ENCODE measurements at regions of chr3 and their contacts with region 1.

Region 1: GRCh38 chr3:187679638-187680396 is 9.6 kb upstream of the SST start:
- DNase-seq: peak; percentile 50
- ATAC-seq: peak; percentile 70
- H3K4me3 Mint-ChIP-seq: no peak overlapping the region
- H3K27ac Mint-ChIP-seq: no peak overlapping the region
- H3K4me1 Mint-ChIP-seq: no peaks in the 10 kb centered on the region
- H3K27me3 Mint-ChIP-seq: peaks cover 37% of the 10 kb centered on the region
- CTCF ChIP-seq: peak; percentile 55

Region 2: DNA sequence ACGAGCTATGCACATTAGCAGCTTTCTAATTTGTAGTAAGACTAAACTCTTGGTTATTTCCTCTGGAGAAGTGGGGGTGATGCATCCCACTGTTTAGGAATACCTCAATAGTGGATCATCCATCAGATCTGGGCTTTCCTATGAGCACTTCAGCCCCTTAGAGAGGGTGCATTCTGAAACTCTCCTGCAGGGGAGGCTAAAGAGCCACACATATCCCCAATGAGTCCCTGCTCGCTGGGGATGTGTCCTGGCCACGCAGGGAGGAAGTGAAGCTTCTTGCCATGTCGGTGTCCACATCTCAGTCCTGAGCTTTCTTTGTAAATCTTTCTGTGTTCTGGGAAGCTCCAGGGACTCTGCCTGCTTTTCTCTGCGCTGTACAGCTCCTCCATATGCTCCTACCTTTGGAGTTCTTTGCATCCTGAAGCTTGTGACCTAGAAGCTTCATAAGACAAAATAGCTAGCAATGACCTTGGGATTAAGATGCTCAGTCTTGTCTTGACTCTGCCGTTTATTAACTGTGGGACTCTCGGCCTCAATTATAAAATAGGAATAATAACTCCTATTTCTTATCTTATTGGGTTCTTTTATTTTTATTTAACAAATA is 360.0 kb before region 1 on chr3:
- CTCF ChIA-PET with region 1: interaction called, 336 read pairs
- POLR2A ChIA-PET with region 1: interaction called, 3 read pairs
- intact Hi-C with region 1: loop called (anchors 1 kb)
- DNase-seq: no peak
- ATAC-seq: peak; percentile 64
- H3K4me3 Mint-ChIP-seq: no peak overlapping the region
- H3K27ac Mint-ChIP-seq: no peak overlapping the region
- H3K4me1 Mint-ChIP-seq: peaks cover 6% of the 10 kb centered on the region
- H3K27me3 Mint-ChIP-seq: peaks cover 36% of the 10 kb centered on the region
- CTCF ChIP-seq: no peak

Region 3: DNA sequence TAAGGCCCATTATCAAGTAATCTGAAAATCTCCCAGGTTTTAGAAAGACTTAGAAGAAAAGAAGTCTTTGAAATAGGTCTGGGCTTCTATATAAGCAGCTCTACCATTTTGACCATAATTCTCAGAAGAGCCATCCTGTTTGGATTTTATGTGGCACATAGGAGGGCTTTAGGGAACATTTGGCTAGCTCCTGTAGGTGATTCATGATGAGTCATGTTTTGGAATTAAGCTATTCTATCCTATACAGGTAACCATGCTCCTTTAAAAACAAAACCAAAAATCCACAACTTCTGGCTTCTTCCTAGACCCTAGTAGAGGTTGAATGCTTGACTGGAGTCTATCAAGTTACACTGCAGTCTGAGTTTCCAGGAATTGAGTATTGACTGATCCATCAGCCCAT is 18.6 kb before region 1 on chr3:
- CTCF ChIA-PET with region 1: interaction called, 11 read pairs
- POLR2A ChIA-PET with region 1: no interaction called
- intact Hi-C with region 1: no loop called
- DNase-seq: no peak
- ATAC-seq: no peak
- H3K4me3 Mint-ChIP-seq: no peak overlapping the region
- H3K27ac Mint-ChIP-seq: no peak overlapping the region
- H3K4me1 Mint-ChIP-seq: peaks cover 15% of the 10 kb centered on the region
- H3K27me3 Mint-ChIP-seq: no peaks in the 10 kb centered on the region
- CTCF ChIP-seq: no peak

Region 4: GRCh38 chr3:187702507-187703033 is 22.8 kb after region 1 on chr3 and contains the start of gene RTP2:
- CTCF ChIA-PET with region 1: interaction called, 13 read pairs
- POLR2A ChIA-PET with region 1: no interaction called
- intact Hi-C with region 1: no loop called
- DNase-seq: no peak
- ATAC-seq: no peak
- H3K4me3 Mint-ChIP-seq: no peak within 1 kb of the TSS
- H3K27ac Mint-ChIP-seq: no peak within 1 kb of the TSS
- H3K4me1 Mint-ChIP-seq: no peaks in the 10 kb centered on the region
- H3K27me3 Mint-ChIP-seq: no peaks in the 10 kb centered on the region
- CTCF ChIP-seq: no peak
- total RNA-seq, gene RTP2: not detected in 2 replicates

Region 5: DNA sequence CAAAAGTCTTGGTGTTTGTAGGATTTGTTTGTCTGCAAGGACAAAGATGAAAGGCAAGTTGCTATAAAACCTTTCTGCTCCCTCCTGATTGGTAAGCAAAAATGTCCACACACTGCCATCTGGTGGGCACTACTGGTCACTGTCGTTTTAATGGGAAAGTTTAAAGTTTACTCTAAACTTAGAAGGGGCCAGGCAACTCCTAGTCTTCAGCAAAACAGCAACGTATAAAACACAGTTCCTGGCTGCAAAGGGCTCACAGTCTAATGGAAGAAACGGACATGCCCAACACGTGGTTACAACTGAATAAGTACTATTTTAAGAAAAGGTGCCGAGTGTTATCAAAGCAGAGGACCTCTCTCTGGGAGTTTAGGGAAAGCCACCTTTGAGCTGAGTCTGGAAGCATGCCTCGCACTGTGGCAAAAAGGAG is 1468.3 kb after region 1 on chr3:
- CTCF ChIA-PET with region 1: no interaction called
- POLR2A ChIA-PET with region 1: no interaction called
- intact Hi-C with region 1: loop called (anchors 1 kb)
- DNase-seq: peak; percentile 27
- ATAC-seq: peak; percentile 60
- H3K4me3 Mint-ChIP-seq: no peak overlapping the region
- H3K27ac Mint-ChIP-seq: no peak overlapping the region
- H3K4me1 Mint-ChIP-seq: no peaks in the 10 kb centered on the region
- H3K27me3 Mint-ChIP-seq: peaks cover 8% of the 10 kb centered on the region
- CTCF ChIP-seq: peak; percentile 56